ENCODE measurements at regions of chr10 and their contacts with region 1.

Region 1: GRCh38 chr10:110279407-110279986 is 25.2 kb downstream of the SMNDC1 start:
- DNase-seq: peak; percentile 43
- H3K4me3 ChIP-seq: no peak overlapping the region
- H3K27ac ChIP-seq: no peak overlapping the region
- H3K27me3 ChIP-seq: no peaks in the 10 kb centered on the region
- CTCF ChIP-seq: peak; percentile 80

Region 2: GRCh38 chr10:110241407-110241806 is 38.1 kb before region 1 on chr10:
- CTCF ChIA-PET with region 1: interaction called, 15 read pairs
- POLR2A ChIA-PET with region 1: no interaction called
- DNase-seq: no peak
- H3K4me3 ChIP-seq: no peak overlapping the region
- H3K27ac ChIP-seq: no peak overlapping the region
- H3K27me3 ChIP-seq: no peaks in the 10 kb centered on the region
- CTCF ChIP-seq: no peak

Region 3: DNA sequence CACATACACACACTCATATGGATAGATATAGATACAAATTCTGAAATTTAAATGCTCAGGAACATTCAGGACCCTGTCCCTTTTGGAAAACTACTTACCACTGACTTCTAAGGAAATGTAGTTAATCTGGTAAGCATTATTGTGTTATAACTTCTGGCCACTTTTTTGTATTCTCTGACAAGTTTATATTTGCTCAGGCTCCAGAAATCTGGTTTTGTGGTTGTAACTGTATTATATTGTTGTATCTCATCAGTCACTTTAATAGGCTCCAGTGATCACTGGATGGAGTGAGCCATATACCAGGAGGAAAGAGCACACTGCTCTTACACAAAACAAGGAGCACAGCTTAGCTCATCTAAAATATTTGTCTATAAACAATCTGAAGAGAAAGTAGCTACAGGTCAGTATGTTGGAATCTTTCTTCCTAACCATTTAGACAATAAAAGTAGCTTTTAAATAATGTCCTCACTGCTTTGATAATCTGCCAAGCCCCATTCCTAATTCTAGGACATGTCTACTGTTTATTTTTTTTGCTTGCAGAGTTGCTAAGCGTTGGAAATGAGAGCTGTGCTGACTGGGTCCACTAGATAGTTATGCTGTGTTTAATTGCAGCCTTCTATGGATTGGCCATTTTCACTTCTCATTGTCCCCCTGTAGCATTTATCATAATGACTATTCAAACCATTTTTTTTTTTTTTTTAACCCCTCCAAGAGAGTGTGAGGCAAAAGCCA is 18.6 kb before region 1 on chr10:
- CTCF ChIA-PET with region 1: interaction called, 10 read pairs
- POLR2A ChIA-PET with region 1: no interaction called
- DNase-seq: no peak
- H3K4me3 ChIP-seq: no peak overlapping the region
- H3K27ac ChIP-seq: no peak overlapping the region
- H3K27me3 ChIP-seq: no peaks in the 10 kb centered on the region
- CTCF ChIP-seq: no peak

Region 4: GRCh38 chr10:110395725-110396651 is 116.5 kb after region 1 on chr10:
- CTCF ChIA-PET with region 1: no interaction called
- POLR2A ChIA-PET with region 1: no interaction called
- DNase-seq: peak; percentile 86
- H3K4me3 ChIP-seq: no peak overlapping the region
- H3K27ac ChIP-seq: peak overlapping the region; percentile 21
- H3K27me3 ChIP-seq: no peaks in the 10 kb centered on the region
- CTCF ChIP-seq: no peak

Measured in AG04450 (cell line).